ENCODE measurements at regions of chr3 and their contacts with region 1.

Region 1: DNA sequence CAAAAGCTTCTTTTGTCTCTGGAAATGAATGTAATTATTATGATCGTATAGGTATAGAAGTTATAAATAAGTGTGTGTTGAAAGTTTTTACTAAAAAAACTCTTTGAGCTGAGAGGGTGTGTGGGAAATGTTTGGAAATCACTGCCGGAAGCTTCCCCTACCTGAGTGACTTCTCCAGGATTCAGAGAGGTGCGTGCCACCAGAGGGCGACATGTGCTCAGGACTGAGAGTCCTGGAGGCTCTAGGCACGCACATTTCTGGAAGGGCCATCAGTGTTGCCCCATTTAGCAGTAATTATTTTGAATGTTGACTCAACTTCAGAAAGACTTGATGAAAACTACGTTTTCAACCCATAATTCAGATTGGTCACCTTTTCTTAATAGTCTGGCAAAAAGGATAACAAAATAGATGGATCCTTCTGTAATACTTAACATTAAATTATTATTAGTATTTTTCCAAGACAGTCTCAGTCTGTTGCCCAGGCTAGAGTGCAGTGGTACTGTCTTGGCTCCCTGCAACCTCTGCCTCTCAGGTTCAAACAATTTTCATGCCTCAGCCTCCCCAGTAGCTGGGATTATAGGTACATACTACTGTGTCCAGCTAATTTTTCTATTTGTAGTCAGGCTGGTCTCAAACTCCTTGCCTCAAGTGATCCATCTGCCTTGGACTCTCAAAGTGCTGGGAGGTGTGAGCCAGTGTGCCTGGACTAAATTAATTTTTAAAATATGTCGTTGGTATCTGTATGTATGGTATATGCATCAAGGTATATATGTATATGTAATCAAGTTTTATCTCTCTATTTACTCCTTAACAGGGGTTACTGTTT is 34.5 kb downstream of the GPR171 start:
- DNase-seq: peak; percentile 86
- H3K4me3 Mint-ChIP-seq: no peak overlapping the region
- H3K27ac Mint-ChIP-seq: no peak overlapping the region
- H3K4me1 Mint-ChIP-seq: peaks cover 48% of the 10 kb centered on the region
- H3K27me3 Mint-ChIP-seq: no peaks in the 10 kb centered on the region

Region 2: DNA sequence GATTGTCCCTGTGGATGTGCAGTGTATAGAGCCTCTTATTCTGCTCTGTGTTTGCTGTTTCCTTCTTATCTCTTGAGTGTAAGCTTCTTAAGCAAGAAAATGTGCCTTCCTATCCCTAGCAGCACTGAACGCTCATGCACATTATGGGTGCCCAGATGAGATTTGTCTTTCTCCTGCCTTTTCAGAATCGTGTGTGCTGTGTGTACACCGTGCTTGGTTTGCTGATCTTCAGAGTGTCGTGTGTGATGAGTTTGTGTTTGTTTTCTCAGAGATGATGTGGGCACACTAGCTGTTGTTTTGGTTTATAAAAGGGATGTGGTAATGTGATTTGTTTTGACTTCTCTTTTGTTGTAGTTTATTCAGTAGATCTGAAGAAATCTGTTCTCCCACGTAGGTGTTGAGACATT is 14.8 kb after region 1 on chr3:
- CTCF ChIA-PET with region 1: interaction called, 13 read pairs
- POLR2A ChIA-PET with region 1: interaction called, 28 read pairs
- DNase-seq: peak; percentile 37
- H3K4me3 Mint-ChIP-seq: peak overlapping the region; percentile 53
- H3K27ac Mint-ChIP-seq: peak overlapping the region; percentile 79
- H3K4me1 Mint-ChIP-seq: peaks cover 49% of the 10 kb centered on the region
- H3K27me3 Mint-ChIP-seq: peaks cover 2% of the 10 kb centered on the region

Region 3: GRCh38 chr3:151210676-151211381 is 42.3 kb after region 1 on chr3:
- CTCF ChIA-PET with region 1: interaction called, 27 read pairs
- POLR2A ChIA-PET with region 1: interaction called, 73 read pairs
- DNase-seq: no peak
- H3K4me3 Mint-ChIP-seq: peak overlapping the region; percentile 60
- H3K27ac Mint-ChIP-seq: peak overlapping the region; percentile 81
- H3K4me1 Mint-ChIP-seq: peaks cover 54% of the 10 kb centered on the region
- H3K27me3 Mint-ChIP-seq: no peaks in the 10 kb centered on the region

Region 4: DNA sequence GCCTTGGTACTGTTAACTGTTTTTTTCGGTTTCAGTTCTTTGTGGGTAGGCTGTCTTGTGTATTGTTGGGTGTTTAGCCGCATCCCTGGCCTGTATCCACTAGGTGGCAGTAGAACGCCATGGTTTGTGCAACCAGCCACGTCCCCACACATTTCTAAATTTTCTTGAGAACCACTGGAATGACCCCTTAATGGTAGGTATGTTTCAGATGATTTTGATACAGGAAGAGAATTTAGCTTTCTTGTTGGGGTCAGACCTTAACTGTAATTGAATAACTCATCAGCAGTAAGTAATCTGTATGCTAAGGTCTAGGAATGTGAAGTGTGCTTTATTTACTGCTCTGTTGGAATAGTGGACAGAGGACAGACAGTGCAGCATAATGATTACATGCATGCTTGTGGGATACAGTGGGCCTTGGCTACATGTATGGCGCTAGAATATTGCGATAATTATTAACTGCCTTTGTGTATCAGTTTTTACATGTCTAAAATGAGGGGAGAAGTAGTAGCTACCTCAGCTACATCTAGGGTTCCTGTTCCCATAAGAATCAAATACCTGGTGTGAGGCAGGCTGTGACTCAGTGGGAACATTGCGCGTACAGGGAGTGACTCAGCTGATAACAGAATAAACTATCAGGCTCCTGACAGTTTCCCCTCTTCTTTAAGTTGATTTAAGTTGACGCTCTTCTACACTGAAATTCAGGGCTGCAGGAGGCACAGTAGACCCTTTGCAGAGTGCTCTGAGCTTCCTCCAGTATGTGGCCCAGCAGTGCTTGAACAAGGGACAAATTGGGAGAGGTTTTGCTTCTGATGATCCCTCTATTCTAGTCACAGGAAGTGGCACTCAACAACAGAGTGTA is 59.6 kb after region 1 on chr3:
- CTCF ChIA-PET with region 1: interaction called, 89 read pairs
- POLR2A ChIA-PET with region 1: interaction called, 6 read pairs
- DNase-seq: peak; percentile 85
- H3K4me3 Mint-ChIP-seq: peak overlapping the region; percentile 21
- H3K27ac Mint-ChIP-seq: peak overlapping the region; percentile 69
- H3K4me1 Mint-ChIP-seq: peaks cover 55% of the 10 kb centered on the region
- H3K27me3 Mint-ChIP-seq: no peaks in the 10 kb centered on the region

Region 5: GRCh38 chr3:151265866-151266265 is 97.4 kb after region 1 on chr3:
- CTCF ChIA-PET with region 1: interaction called, 17 read pairs
- POLR2A ChIA-PET with region 1: interaction called, 5 read pairs
- DNase-seq: no peak
- H3K4me3 Mint-ChIP-seq: no peak overlapping the region
- H3K27ac Mint-ChIP-seq: no peak overlapping the region
- H3K4me1 Mint-ChIP-seq: peaks cover 28% of the 10 kb centered on the region
- H3K27me3 Mint-ChIP-seq: no peaks in the 10 kb centered on the region

Region 6: DNA sequence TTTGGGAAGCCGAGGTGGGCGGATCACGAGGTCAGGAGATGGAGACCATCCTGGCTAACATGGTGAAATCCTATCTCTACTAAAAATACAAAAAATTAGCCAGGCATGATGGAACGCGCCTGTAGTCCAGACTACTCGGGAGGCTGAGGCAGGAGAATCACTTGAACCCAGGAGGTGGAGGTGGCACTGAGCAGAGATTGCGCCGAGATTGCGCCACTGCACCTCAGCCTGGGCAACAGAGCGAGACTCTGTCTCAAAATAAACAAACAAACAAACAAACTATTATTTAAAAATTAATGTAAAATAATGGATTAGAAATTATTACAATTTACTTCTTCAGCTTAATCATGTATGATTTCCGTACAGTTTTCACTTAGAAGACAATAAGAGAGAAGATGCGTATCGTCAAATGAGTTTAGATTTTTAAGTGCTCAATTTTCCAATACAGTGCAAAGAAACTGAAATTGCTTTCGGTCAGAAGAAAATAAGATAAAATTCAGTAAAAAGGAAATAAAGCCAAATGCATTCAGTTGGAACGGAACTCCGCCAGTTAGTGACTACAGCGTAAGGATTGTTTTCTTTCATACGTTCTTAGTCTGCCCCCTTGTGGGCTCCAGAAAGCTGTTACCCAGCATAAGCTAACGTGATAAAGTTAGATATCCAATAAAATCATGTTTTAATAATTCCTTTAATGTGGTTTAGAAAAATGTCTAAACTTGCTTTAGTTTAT is 670.3 kb after region 1 on chr3:
- CTCF ChIA-PET with region 1: interaction called, 10 read pairs
- POLR2A ChIA-PET with region 1: no interaction called
- DNase-seq: peak; percentile 33
- H3K4me3 Mint-ChIP-seq: no peak overlapping the region
- H3K27ac Mint-ChIP-seq: no peak overlapping the region
- H3K4me1 Mint-ChIP-seq: peaks cover 2% of the 10 kb centered on the region
- H3K27me3 Mint-ChIP-seq: peaks cover 26% of the 10 kb centered on the region